Psoas muscle (tissue), 8 donors: ENCODE measurements at regions of chr9 and their contacts with region 1.

Region 1: GRCh38 chr9:29290516-29290915 is 1717.2 kb upstream of the C9orf72 start:
- DNase-seq: no peak
- ATAC-seq: no peak
- H3K4me3 ChIP-seq: no peak overlapping the region
- H3K27ac ChIP-seq: no peak overlapping the region
- H3K4me1 ChIP-seq: no peaks in the 10 kb centered on the region
- H3K27me3 ChIP-seq: no peaks in the 10 kb centered on the region
- CTCF ChIP-seq: no peak

Region 2: GRCh38 chr9:29514336-29514735 is 223.8 kb after region 1 on chr9:
- intact Hi-C with region 1: loop called in 1 of 2 experiments (anchors 10 kb)
- DNase-seq: peak in 1 of 2 donors; percentile 35
- ATAC-seq: no peak
- H3K4me3 ChIP-seq: no peak overlapping the region
- H3K27ac ChIP-seq: no peak overlapping the region
- H3K4me1 ChIP-seq: no peaks in the 10 kb centered on the region
- H3K27me3 ChIP-seq: no peaks in the 10 kb centered on the region
- CTCF ChIP-seq: no peak